GM13977 (cell line): ENCODE measurements at regions of chr1 and their contacts with region 1.

Region 1: GRCh38 chr1:37676281-37677243 is 15.8 kb upstream of the CDCA8 start:
- DNase-seq: peak; percentile 48
- CTCF ChIP-seq: peak; percentile 28

Region 2: GRCh38 chr1:37602750-37603694 is 73.5 kb before region 1 on chr1:
- in situ Hi-C with region 1: loop called (anchors 10 kb)
- DNase-seq: peak; percentile 70
- CTCF ChIP-seq: peak; percentile 73